Esophagus muscularis mucosa (tissue), 4 donors: ENCODE measurements at regions of chr3 and their contacts with region 1.

Region 1: DNA sequence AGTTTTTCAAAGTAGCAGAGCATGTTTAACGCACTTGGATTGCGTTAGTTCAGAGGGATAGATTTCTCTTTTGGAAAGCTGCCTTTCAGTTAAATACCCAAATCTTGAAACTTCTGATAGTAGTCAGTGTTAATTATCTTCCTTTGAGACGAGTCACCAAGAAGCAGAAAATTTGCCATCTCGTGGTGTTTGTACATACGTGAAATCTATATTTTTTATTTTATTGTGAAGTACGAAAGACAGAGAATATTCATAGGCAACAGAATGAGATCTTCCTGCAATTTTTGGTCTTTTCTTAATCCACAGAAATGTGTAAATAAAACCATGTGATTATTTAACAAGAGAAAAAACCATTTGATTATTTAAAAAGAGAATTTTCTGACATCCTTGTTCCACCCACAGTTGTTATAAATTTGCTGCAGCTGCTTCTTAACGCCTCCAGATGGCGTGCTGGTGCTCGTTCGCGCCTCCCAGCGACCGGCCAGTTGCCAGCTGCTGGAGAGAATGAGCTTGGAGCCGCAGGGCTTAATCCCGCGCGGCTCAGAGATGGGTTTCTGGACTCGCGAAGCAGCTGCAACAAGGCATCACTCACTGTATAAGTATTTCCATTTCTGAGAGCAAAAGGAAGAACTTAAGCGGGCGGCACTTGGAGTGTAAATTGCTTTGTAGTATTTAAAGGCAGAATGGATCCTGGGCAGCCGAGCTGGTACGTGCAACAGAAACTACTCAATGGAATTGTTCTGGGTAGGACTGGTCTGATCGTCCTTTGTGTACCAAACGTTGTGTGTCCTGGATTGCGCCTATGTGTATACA is 10.5 kb upstream of the SLITRK3 start:
- DNase-seq: no peak
- H3K4me3 ChIP-seq: peak overlapping the region; percentile 53 to 62 (median 58)
- H3K27ac ChIP-seq: peak overlapping the region; percentile 65 to 82 (median 69)
- H3K4me1 ChIP-seq: peaks cover 0 to 24% (median 17%) of the 10 kb centered on the region in 4 donors
- H3K27me3 ChIP-seq: no peaks in the 10 kb centered on the region
- CTCF ChIP-seq: peak; percentile 86 to 90 (median 87)
- EP300 ChIP-seq: no peak
- POLR2A ChIP-seq: no peak

Region 2: GRCh38 chr3:164952966-164953365 is 253.7 kb before region 1 on chr3:
- intact Hi-C with region 1: no loop called
- DNase-seq: no peak
- H3K4me3 ChIP-seq: no peak overlapping the region
- H3K27ac ChIP-seq: no peak overlapping the region
- H3K4me1 ChIP-seq: no peaks in the 10 kb centered on the region
- H3K27me3 ChIP-seq: no peaks in the 10 kb centered on the region
- CTCF ChIP-seq: no peak
- EP300 ChIP-seq: no peak
- POLR2A ChIP-seq: no peak

Region 3: DNA sequence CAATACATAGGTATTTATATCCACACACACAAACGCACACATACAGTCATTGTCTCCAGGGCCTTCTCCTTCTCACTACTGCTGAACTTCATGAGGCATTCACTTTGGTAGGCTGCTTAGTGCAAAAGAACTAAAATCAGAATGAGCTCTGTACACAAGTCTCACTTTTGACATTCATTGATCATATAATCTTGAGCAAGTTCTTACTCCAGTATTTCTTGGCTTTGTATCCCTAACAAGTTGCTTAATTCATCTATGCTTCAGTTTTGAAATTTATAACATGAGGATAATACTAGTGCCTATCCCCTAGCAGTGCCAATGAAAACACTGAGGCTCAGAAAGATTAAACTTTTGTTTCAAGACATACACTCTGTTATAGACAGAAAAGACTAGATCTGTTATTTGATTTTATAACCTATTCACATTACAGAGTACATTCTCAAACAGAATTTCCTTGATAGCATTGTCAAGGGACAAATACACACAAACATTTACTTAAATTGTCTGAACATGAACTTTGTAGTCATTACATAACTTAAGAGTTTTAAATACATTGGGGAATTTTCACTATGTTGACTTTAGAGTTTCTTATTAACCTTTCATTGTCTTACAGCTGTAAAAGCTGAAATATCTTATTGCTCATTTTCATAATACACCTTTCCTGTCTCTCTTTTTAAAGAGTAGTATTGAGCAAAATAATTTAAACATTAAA is 73.3 kb before region 1 on chr3:
- intact Hi-C with region 1: no loop called
- DNase-seq: no peak
- H3K4me3 ChIP-seq: no peak overlapping the region
- H3K27ac ChIP-seq: no peak overlapping the region
- H3K4me1 ChIP-seq: no peaks in the 10 kb centered on the region
- H3K27me3 ChIP-seq: no peaks in the 10 kb centered on the region
- CTCF ChIP-seq: no peak
- EP300 ChIP-seq: no peak
- POLR2A ChIP-seq: no peak

Region 4: GRCh38 chr3:165279471-165279870 is 72.8 kb after region 1 on chr3:
- intact Hi-C with region 1: no loop called
- DNase-seq: no peak
- H3K4me3 ChIP-seq: no peak overlapping the region
- H3K27ac ChIP-seq: no peak overlapping the region
- H3K4me1 ChIP-seq: peaks cover 0 to 6% (median 3%) of the 10 kb centered on the region in 4 donors
- H3K27me3 ChIP-seq: no peaks in the 10 kb centered on the region
- CTCF ChIP-seq: no peak
- EP300 ChIP-seq: no peak
- POLR2A ChIP-seq: no peak

Region 5: DNA sequence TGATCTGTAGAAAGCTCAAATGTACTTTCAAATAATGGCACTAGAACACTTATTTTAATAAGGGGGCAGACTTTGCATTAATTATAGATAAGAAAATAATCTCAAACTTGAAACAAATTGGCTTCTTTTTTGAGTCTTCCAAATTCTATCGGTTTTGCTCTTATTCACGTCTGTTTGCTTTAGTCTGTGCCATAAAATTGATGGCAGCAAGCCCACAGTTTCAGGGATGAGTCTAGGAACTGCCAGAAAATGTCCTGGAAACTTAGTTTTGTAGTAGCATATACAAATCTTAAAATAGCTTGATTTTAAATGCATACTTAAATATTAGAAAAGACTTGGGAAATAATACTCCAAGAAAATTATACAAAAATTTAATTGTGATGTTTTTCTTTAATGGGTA is 590.9 kb after region 1 on chr3:
- intact Hi-C with region 1: loop called (anchors 10 kb)
- DNase-seq: no peak
- H3K4me3 ChIP-seq: peak overlapping the region in 2 of 4 donors; percentile 7 to 12
- H3K27ac ChIP-seq: peak overlapping the region in 3 of 4 donors; percentile 32 to 51 (median 45)
- H3K4me1 ChIP-seq: peaks cover 0 to 33% (median 25%) of the 10 kb centered on the region in 4 donors
- H3K27me3 ChIP-seq: no peaks in the 10 kb centered on the region
- CTCF ChIP-seq: no peak
- EP300 ChIP-seq: no peak
- POLR2A ChIP-seq: no peak

Region 6: GRCh38 chr3:165817160-165817709 is 610.6 kb after region 1 on chr3:
- intact Hi-C with region 1: loop called (anchors 10 kb)
- DNase-seq: no peak
- H3K4me3 ChIP-seq: no peak overlapping the region
- H3K27ac ChIP-seq: no peak overlapping the region
- H3K4me1 ChIP-seq: peaks cover 0 to 41% (median 10%) of the 10 kb centered on the region in 4 donors
- H3K27me3 ChIP-seq: no peaks in the 10 kb centered on the region
- CTCF ChIP-seq: no peak
- EP300 ChIP-seq: no peak
- POLR2A ChIP-seq: no peak